Activated CD4-positive, alpha-beta T cell treated with anti-CD3 and anti-CD28 coated beads, Interleukin-2, amount 10 ng/mL, durations not matched to agents 7 days and 5 days (primary cell): ENCODE measurements at regions of chr10 and their contacts with region 1.

Region 1: GRCh38 chr10:62816331-62817120 is at the start of gene EGR2:
- DNase-seq: peak; percentile 96
- H3K4me3 Mint-ChIP-seq: peak within 1 kb of the TSS; percentile 92
- H3K27ac Mint-ChIP-seq: peak within 1 kb of the TSS; percentile 98
- H3K4me1 Mint-ChIP-seq: peaks cover 46% of the 10 kb centered on the region
- H3K27me3 Mint-ChIP-seq: peaks cover 71% of the 10 kb centered on the region
- total RNA-seq, gene EGR2: 0.67 to 0.92 TPM

Region 2: DNA sequence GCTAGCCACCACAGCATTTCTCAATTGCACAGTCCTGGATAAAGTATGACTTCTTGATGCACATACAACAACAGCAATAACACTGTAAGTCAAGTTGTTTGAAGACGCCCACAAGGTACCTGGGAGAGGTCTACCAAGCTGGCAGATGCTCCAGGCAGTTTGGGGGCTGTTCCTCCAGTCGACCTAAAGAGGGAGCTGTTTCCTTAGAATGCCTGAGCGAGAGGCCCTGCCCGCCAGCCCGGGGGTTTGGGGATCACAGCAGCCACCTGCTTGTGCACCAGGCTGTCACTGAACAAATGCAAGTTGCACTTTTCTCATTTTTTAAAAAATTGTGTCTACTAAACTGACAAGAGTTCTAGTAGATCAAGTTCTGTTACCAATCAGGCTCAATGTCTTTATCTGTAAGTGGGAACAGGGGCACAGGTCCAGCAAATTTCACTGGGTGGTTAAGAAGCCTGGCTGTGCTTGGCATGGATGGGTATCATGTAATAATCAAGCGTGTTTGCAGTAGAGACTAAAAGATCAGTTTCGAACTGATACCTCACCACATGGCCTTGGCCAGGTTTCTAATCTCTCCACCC is 205.8 kb before region 1 on chr10:
- CTCF ChIA-PET with region 1: interaction called, 79 read pairs
- POLR2A ChIA-PET with region 1: no interaction called
- DNase-seq: peak; percentile 74
- H3K4me3 Mint-ChIP-seq: no peak overlapping the region
- H3K27ac Mint-ChIP-seq: no peak overlapping the region
- H3K4me1 Mint-ChIP-seq: peaks cover 14% of the 10 kb centered on the region
- H3K27me3 Mint-ChIP-seq: peaks cover 9% of the 10 kb centered on the region

Region 3: GRCh38 chr10:62618576-62619412 is 197.7 kb before region 1 on chr10:
- CTCF ChIA-PET with region 1: interaction called, 79 read pairs
- POLR2A ChIA-PET with region 1: no interaction called
- DNase-seq: no peak
- H3K4me3 Mint-ChIP-seq: no peak overlapping the region
- H3K27ac Mint-ChIP-seq: no peak overlapping the region
- H3K4me1 Mint-ChIP-seq: peaks cover 14% of the 10 kb centered on the region
- H3K27me3 Mint-ChIP-seq: no peaks in the 10 kb centered on the region

Region 4: DNA sequence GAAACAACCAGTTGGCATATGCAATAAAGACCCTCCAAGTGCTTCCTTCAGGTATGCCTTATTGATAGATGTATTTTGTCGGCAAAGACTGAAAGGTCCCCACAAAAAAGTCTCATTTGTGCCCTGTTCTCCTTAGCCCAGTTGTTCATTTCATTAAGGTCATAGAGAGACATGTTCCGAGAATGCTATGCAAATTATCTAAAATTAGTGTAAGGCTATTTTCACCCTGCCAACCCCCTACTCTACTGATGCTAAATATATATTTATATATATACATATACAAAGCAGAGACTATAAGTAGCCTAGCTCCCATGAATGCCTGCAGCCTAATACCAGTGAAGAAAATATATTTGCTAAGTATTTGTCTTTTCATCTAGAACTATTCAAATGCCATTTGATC is 108.7 kb before region 1 on chr10:
- CTCF ChIA-PET with region 1: no interaction called
- POLR2A ChIA-PET with region 1: no interaction called
- DNase-seq: no peak
- H3K4me3 Mint-ChIP-seq: no peak overlapping the region
- H3K27ac Mint-ChIP-seq: no peak overlapping the region
- H3K4me1 Mint-ChIP-seq: peaks cover 3% of the 10 kb centered on the region
- H3K27me3 Mint-ChIP-seq: peaks cover 12% of the 10 kb centered on the region

Region 5: DNA sequence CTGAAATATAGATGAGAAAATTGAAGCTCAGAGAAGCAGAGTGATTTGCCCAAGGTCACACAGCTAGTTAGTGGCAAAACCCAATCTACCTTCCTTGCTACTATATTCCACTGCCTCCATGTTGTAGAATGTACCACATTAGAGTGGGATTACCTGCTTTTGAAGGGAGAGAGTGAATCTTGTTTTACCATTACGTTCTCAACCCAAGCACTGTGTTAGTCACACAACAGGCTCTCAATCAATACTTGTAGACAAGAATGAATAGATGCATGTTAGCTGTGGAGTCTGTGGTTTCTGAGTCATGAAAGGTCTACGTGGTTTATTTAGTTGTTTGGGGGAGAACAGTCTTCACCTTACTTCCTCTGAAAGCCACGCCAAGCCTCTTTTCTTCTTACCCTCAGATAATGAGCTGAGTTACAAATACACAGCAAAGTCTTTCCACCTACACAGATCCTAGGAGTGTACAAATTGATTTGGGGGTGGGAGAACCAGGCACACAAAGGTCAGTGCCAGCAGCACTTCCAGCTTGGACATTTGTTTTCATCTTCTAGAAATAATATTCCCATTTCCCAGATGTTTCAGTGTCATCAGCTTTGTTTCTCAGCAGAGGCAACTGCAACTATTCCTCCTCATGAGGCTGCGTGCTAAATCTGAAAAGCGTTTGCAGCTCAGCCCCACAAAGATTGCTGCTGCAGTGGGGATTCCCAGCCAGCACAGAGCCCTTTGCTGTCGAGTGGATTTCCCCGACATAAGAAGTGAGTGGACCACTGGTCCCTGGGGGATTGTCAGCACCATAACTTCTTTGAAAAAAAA is 83.5 kb before region 1 on chr10:
- CTCF ChIA-PET with region 1: interaction called, 10 read pairs
- POLR2A ChIA-PET with region 1: interaction called, 3 read pairs
- DNase-seq: peak; percentile 81
- H3K4me3 Mint-ChIP-seq: peak overlapping the region; percentile 48
- H3K27ac Mint-ChIP-seq: no peak overlapping the region
- H3K4me1 Mint-ChIP-seq: peaks cover 16% of the 10 kb centered on the region
- H3K27me3 Mint-ChIP-seq: peaks cover 10% of the 10 kb centered on the region

Region 6: DNA sequence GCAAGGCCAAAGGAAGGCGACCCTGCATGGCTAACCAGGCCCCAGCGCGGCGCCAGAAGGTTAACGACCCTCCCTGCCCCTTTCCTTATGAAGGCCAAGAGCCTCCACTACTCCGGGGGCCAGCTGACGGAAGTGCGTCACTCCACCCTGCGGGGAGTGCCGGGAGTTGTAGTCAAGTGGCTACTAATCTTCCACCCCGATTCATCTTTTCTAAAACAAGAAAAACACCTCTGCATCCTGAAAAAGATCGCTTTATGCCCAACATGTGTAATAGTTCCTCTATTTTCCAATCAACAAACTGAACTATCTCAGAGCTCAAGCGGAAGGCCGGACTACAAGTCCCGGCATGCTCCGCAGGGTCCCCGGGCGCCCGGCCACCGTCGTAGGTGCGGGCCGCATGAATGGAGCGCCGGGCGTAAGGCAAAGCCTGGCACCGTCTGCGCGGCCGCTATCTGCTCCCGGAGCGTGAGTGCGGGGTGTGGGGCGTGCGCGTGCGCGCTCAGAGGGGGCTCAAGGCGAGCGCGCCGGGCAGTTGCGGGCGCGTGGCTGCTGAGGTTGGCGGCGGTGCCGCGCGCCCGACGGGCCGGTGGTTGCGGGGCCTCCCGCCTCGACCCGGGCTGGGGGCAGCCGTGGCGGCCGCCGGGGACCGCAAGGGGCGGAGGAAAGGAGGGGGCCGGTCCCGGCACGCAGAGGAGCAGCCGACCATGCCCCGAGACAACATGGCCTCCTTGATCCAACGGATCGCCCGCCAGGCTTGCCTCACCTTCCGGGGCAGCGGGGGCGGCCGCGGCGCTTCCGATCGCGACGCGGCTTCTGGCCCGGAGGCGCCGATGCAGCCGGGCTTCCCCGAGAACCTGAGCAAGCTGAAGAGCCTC is 11.9 kb before region 1 on chr10 and contains the start of gene ADO:
- CTCF ChIA-PET with region 1: interaction called, 71 read pairs
- POLR2A ChIA-PET with region 1: interaction called, 4 read pairs
- DNase-seq: peak; percentile 81
- H3K4me3 Mint-ChIP-seq: peak within 1 kb of the TSS; percentile 86
- H3K27ac Mint-ChIP-seq: peak within 1 kb of the TSS; percentile 97
- H3K4me1 Mint-ChIP-seq: peaks cover 38% of the 10 kb centered on the region
- H3K27me3 Mint-ChIP-seq: peaks cover 14% of the 10 kb centered on the region
- total RNA-seq, gene ADO: 18.2 to 19.7 TPM